ENCODE measurements at regions of chr2 and their contacts with region 1.

Region 1: GRCh38 chr2:11508279-11508678 is 25.6 kb upstream of the GREB1 start:
- DNase-seq: no peak
- ATAC-seq: no peak
- H3K4me3 ChIP-seq: no peak overlapping the region
- H3K27ac ChIP-seq: no peak overlapping the region
- H3K4me1 ChIP-seq: no peaks in the 10 kb centered on the region
- H3K27me3 ChIP-seq: no peaks in the 10 kb centered on the region
- CTCF ChIP-seq: no peak

Region 2: GRCh38 chr2:11140492-11140891 is 367.8 kb before region 1 on chr2:
- CTCF ChIA-PET with region 1: no interaction called
- POLR2A ChIA-PET with region 1: interaction called, 14 read pairs
- in situ Hi-C with region 1: no loop called
- intact Hi-C with region 1: no loop called
- DNase-seq: no peak
- ATAC-seq: no peak
- H3K4me3 ChIP-seq: no peak overlapping the region
- H3K27ac ChIP-seq: no peak overlapping the region
- H3K4me1 ChIP-seq: no peaks in the 10 kb centered on the region
- H3K27me3 ChIP-seq: no peaks in the 10 kb centered on the region; the same call in 1 of the 2 replicates
- CTCF ChIP-seq: no peak